RWPE1 (cell line): ENCODE measurements at regions of chr20 and their contacts with region 1.

Region 1: DNA sequence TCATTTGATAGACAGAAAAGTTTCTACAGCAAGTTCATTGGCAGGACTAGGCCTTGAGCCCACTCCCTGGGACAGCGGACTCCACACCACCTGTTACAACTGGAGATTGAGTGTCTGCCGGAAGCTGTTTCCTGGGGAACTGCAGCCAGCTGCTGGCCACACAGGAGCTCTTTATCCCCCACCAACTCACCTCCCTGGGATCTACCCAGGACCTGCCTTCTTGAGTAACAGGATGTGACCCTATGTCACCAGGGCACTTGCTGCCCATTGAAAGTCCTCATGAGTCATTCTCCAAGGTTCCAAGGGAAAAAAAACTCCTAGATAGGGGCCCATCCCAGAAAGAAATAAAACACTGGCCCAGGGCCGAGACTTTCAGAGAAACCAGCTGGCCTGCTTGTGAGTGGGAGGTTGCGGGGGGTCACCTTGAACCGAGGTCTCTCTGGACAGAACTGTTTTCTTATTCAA is 37.4 kb upstream of the SLC9A8 start:
- DNase-seq: peak; percentile 68
- H3K27ac ChIP-seq: peak overlapping the region; percentile 64
- CTCF ChIP-seq: no peak

Region 2: GRCh38 chr20:49516916-49517789 is 258.1 kb before region 1 on chr20:
- CTCF ChIA-PET with region 1: no interaction called
- POLR2A ChIA-PET with region 1: no interaction called
- DNase-seq: no peak
- H3K27ac ChIP-seq: no peak overlapping the region
- CTCF ChIP-seq: no peak

Region 3: DNA sequence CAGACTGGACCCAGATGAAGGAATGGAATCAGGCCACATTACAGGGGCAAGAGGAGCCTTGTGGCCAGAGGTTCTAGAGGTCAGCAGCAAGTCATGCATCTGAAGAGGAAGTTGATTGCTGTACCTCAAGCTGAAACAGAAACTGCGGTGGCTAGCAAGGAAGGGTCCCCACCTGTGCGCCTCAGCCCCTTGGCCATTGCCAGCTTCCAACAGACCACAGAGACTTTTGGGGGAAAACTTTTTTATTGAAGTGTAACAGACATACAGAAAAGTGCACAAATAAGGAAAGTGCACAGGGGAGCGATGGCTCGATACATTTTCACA is 10.6 kb after region 1 on chr20:
- CTCF ChIA-PET with region 1: interaction called, 11 read pairs
- POLR2A ChIA-PET with region 1: no interaction called
- DNase-seq: no peak
- H3K27ac ChIP-seq: no peak overlapping the region
- CTCF ChIP-seq: no peak